GM12878 (cell line): ENCODE measurements at regions of chr3 and their contacts with region 1.

Region 1: GRCh38 chr3:72163809-72164634 is 379.1 kb upstream of the PROK2 start:
- DNase-seq: peak; percentile 96
- ATAC-seq: peak; percentile 90
- H3K4me3 ChIP-seq: 0 out of 2 replicates have a peak overlapping the region, but pooled peaks have one; percentile 32
- H3K27ac ChIP-seq: peak overlapping the region; percentile 93
- H3K4me1 ChIP-seq: peaks cover 35% of the 10 kb centered on the region
- H3K27me3 ChIP-seq: no peaks in the 10 kb centered on the region
- CTCF ChIP-seq: no peak
- EP300 ChIP-seq: peak; percentile 93
- POLR2A ChIP-seq: peak; percentile 72
- RAD21 ChIP-seq: peak; percentile 36

Region 2: DNA sequence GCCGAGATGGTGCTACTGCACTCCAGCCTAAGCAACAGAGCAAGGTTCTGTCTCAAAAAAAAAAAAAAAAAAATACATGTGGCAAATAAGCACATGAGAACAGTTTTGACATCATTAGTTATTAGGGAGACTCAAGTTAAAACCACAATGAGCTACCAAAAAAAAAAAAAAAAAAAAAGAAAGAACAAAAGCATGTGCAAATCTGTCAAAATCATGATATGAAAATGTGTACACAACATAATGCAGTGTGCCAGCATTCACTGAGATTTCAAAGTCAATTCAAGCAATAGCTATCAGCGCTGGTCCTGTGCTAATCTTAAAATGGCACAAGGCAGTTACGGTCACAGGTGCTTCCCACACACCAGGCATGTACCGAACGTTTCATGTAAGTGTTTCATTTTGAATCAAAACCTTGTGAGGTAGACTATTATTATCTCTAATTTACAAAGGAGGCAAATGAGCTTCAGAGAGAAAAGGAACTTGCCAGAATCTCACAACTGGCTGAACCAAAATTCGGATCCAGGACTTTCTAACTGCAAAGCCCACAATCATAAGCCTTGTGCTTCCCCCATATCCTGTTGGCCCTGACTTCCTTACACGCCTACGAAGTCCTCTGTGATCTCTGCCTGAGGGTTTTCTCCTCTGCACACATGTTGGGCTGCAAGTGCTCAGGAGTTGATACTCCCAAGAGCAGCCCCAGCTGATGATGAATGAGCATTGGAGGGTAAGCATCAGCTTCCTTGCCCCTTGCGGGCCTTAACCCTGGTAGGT is 179.0 kb before region 1 on chr3:
- CTCF ChIA-PET with region 1: interaction called, 12 read pairs
- POLR2A ChIA-PET with region 1: interaction called, 19 read pairs
- RAD21 ChIA-PET with region 1: interaction called, 13 read pairs
- SMC1A ChIA-PET with region 1: interaction called, 24 read pairs
- in situ Hi-C with region 1: loop called (anchors 5 kb)
- intact Hi-C with region 1: loop called (anchors 1 kb)
- DNase-seq: peak; percentile 97
- ATAC-seq: peak; percentile 89
- H3K4me3 ChIP-seq: peak overlapping the region; percentile 22; the same call in 1 of the 2 replicates
- H3K27ac ChIP-seq: peak overlapping the region; percentile 92
- H3K4me1 ChIP-seq: peaks cover 64% of the 10 kb centered on the region
- H3K27me3 ChIP-seq: no peaks in the 10 kb centered on the region
- CTCF ChIP-seq: no peak
- EP300 ChIP-seq: peak; percentile 90 to 95
- POLR2A ChIP-seq: no peak
- RAD21 ChIP-seq: peak; percentile 25; the same call in 1 of the 2 replicates

Region 3: GRCh38 chr3:72021531-72021930 is 142.5 kb before region 1 on chr3:
- CTCF ChIA-PET with region 1: no interaction called
- POLR2A ChIA-PET with region 1: no interaction called
- RAD21 ChIA-PET with region 1: no interaction called
- SMC1A ChIA-PET with region 1: no interaction called
- in situ Hi-C with region 1: no loop called
- intact Hi-C with region 1: no loop called
- DNase-seq: no peak
- ATAC-seq: no peak
- H3K4me3 ChIP-seq: no peak overlapping the region
- H3K27ac ChIP-seq: no peak overlapping the region
- H3K4me1 ChIP-seq: no peaks in the 10 kb centered on the region; the same call in 1 of the 2 replicates
- H3K27me3 ChIP-seq: no peaks in the 10 kb centered on the region
- CTCF ChIP-seq: no peak
- EP300 ChIP-seq: no peak
- POLR2A ChIP-seq: no peak
- RAD21 ChIP-seq: no peak

Region 4: GRCh38 chr3:72100601-72101187 is 63.3 kb before region 1 on chr3:
- CTCF ChIA-PET with region 1: interaction called, 8 read pairs
- POLR2A ChIA-PET with region 1: interaction called, 5 read pairs
- RAD21 ChIA-PET with region 1: interaction called, 53 read pairs
- SMC1A ChIA-PET with region 1: interaction called, 38 read pairs
- in situ Hi-C with region 1: no loop called
- intact Hi-C with region 1: loop called (anchors 1 kb)
- DNase-seq: peak; percentile 77
- ATAC-seq: peak; percentile 74
- H3K4me3 ChIP-seq: peak overlapping the region; percentile 69; the same call in 1 of the 2 replicates
- H3K27ac ChIP-seq: peak overlapping the region; percentile 68
- H3K4me1 ChIP-seq: peaks cover 49% of the 10 kb centered on the region
- H3K27me3 ChIP-seq: no peaks in the 10 kb centered on the region
- CTCF ChIP-seq: no peak
- EP300 ChIP-seq: peak; percentile 49 to 76
- POLR2A ChIP-seq: peak; percentile 59
- RAD21 ChIP-seq: 0 out of 2 replicates have a peak, but pooled peaks have one; percentile 5

Region 5: DNA sequence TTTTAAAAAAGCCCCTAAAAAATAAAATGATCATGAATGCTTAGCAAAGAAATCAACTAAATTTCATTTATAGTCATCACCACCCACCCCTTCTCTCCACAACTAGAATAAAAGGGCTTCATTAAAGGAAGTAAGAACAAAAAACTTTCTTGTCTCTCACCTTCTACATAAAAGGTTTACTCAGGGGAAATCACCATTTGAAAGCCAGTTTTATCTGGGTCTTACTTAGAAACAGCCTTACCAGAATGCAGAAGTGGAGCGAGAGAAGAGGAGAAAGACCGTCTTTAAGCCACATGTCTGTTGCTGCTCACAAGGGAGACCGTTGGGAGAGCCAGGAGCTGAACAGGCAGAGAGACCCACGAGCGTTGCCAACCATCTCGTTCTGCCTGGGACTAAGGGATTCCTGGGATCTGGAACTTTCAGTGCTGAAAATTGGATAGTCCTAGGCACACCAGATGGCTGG is 29.0 kb before region 1 on chr3:
- CTCF ChIA-PET with region 1: no interaction called
- POLR2A ChIA-PET with region 1: interaction called, 4 read pairs
- RAD21 ChIA-PET with region 1: interaction called, 16 read pairs
- SMC1A ChIA-PET with region 1: interaction called, 5 read pairs
- in situ Hi-C with region 1: no loop called
- intact Hi-C with region 1: no loop called
- DNase-seq: no peak
- ATAC-seq: peak; percentile 84
- H3K4me3 ChIP-seq: no peak overlapping the region
- H3K27ac ChIP-seq: peak overlapping the region; percentile 4
- H3K4me1 ChIP-seq: peaks cover 32% of the 10 kb centered on the region
- H3K27me3 ChIP-seq: no peaks in the 10 kb centered on the region
- CTCF ChIP-seq: no peak
- EP300 ChIP-seq: 0 out of 4 replicates have a peak, but pooled peaks of 1 of the 2 experiments have one; percentile 13
- POLR2A ChIP-seq: no peak
- RAD21 ChIP-seq: no peak

Region 6: GRCh38 chr3:72265256-72266015 is 101.4 kb after region 1 on chr3:
- CTCF ChIA-PET with region 1: no interaction called
- POLR2A ChIA-PET with region 1: no interaction called
- RAD21 ChIA-PET with region 1: interaction called, 3 read pairs
- SMC1A ChIA-PET with region 1: no interaction called
- in situ Hi-C with region 1: no loop called
- intact Hi-C with region 1: loop called (anchors 5 kb)
- DNase-seq: no peak
- ATAC-seq: peak; percentile 57
- H3K4me3 ChIP-seq: no peak overlapping the region
- H3K27ac ChIP-seq: no peak overlapping the region
- H3K4me1 ChIP-seq: peaks cover 43% of the 10 kb centered on the region
- H3K27me3 ChIP-seq: no peaks in the 10 kb centered on the region
- CTCF ChIP-seq: peak; percentile 3 to 35 (median 23); a peak in 2 of 6 replicates
- EP300 ChIP-seq: no peak
- POLR2A ChIP-seq: no peak
- RAD21 ChIP-seq: peak; percentile 62

Region 7: GRCh38 chr3:72288955-72289691 is 125.1 kb after region 1 on chr3:
- CTCF ChIA-PET with region 1: no interaction called
- POLR2A ChIA-PET with region 1: no interaction called
- RAD21 ChIA-PET with region 1: no interaction called
- SMC1A ChIA-PET with region 1: no interaction called
- in situ Hi-C with region 1: no loop called
- intact Hi-C with region 1: no loop called
- DNase-seq: no peak
- ATAC-seq: peak; percentile 78
- H3K4me3 ChIP-seq: peak overlapping the region; percentile 60; the same call in 1 of the 2 replicates
- H3K27ac ChIP-seq: no peak overlapping the region
- H3K4me1 ChIP-seq: peaks cover 9% of the 10 kb centered on the region
- H3K27me3 ChIP-seq: no peaks in the 10 kb centered on the region
- CTCF ChIP-seq: no peak
- EP300 ChIP-seq: no peak
- POLR2A ChIP-seq: no peak
- RAD21 ChIP-seq: no peak

Region 8: GRCh38 chr3:72426618-72427397 is 262.8 kb after region 1 on chr3:
- CTCF ChIA-PET with region 1: no interaction called
- POLR2A ChIA-PET with region 1: no interaction called
- RAD21 ChIA-PET with region 1: no interaction called
- SMC1A ChIA-PET with region 1: no interaction called
- in situ Hi-C with region 1: no loop called
- intact Hi-C with region 1: loop called (anchors 5 kb)
- DNase-seq: no peak
- ATAC-seq: peak; percentile 76
- H3K4me3 ChIP-seq: 0 out of 2 replicates have a peak overlapping the region, but pooled peaks have one; percentile 27
- H3K27ac ChIP-seq: peak overlapping the region; percentile 37; the same call in 1 of the 2 replicates
- H3K4me1 ChIP-seq: peaks cover 28% of the 10 kb centered on the region
- H3K27me3 ChIP-seq: no peaks in the 10 kb centered on the region
- CTCF ChIP-seq: no peak
- EP300 ChIP-seq: no peak
- POLR2A ChIP-seq: no peak
- RAD21 ChIP-seq: no peak

Region 9: GRCh38 chr3:72679540-72680198 is 515.6 kb after region 1 on chr3:
- CTCF ChIA-PET with region 1: no interaction called
- POLR2A ChIA-PET with region 1: no interaction called
- RAD21 ChIA-PET with region 1: no interaction called
- SMC1A ChIA-PET with region 1: no interaction called
- in situ Hi-C with region 1: no loop called
- intact Hi-C with region 1: loop called (anchors 10 kb)
- DNase-seq: no peak
- ATAC-seq: peak; percentile 32
- H3K4me3 ChIP-seq: no peak overlapping the region
- H3K27ac ChIP-seq: no peak overlapping the region
- H3K4me1 ChIP-seq: peaks cover 39% of the 10 kb centered on the region
- H3K27me3 ChIP-seq: no peaks in the 10 kb centered on the region
- CTCF ChIP-seq: no peak
- EP300 ChIP-seq: peak; percentile 20 to 49; a peak in 2 of 4 replicates
- POLR2A ChIP-seq: no peak
- RAD21 ChIP-seq: no peak